HepG2 (cell line): ENCODE measurements at regions of chr1 and their contacts with region 1.

Region 1: DNA sequence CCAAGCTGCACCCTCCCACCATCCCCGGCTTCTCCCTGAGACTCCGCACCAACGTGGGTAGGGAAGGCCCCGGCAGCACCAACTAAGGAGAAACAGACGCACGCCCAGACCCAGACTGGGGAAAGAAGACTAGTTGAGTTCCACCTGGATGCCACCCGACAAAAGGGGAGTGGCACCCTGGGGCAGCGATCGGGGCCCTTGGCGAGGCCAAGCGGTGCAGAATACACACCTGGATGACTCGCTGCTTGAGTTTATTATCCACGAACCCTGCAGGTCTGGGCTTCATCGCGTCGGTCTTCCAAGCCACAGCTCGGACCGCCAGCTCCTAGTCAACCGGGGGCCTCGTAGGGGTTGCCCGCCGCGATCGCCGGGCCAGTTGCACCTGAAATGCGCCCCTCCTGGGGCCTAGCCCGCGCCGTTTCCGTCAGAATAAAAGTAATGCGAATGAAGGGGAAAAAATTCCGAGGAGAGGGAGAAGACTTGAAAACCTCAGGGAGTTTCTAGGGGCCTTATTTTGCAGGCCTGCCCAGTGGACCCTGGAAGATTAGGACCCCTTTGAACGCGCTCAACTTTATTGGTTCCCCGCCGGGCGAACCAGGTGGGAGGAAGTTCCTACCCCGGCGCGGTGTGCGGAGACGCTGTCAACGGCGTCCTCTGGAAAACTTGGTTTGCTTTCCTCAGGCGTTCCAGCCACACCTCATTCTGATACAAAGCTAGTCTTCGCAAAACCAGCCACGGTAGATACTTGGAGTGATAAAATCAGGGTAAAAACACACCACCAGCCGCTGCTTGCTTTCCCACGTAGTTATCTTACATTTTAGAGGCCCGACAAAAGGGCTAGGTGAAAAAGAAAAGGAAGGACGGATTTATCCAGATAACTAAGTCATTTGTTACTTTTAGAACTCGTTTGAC is at the start of gene NVL:
- DNase-seq: peak; percentile 82
- ATAC-seq: peak; percentile 97
- H3K4me3 ChIP-seq: peak within 1 kb of the TSS; percentile 76 to 94 (median 81)
- H3K27ac ChIP-seq: peak within 1 kb of the TSS; percentile 93
- H3K4me1 ChIP-seq: peaks cover 15% of the 10 kb centered on the region
- H3K27me3 ChIP-seq: no peaks in the 10 kb centered on the region; a peak in 1 of 5 replicates
- CTCF ChIP-seq: no peak
- EP300 ChIP-seq: peak in 1 of 2 experiments; percentile 37; a peak in 1 of 4 replicates
- POLR2A ChIP-seq: peak; percentile 42 to 60
- RAD21 ChIP-seq: no peak
- total RNA-seq, gene NVL: 18.2 and 21.0 TPM in 2 replicates

Region 2: GRCh38 chr1:224113918-224114786 is 215.9 kb before region 1 on chr1 and contains the start of gene FBXO28:
- CTCF ChIA-PET with region 1: interaction called, 7 read pairs
- POLR2A ChIA-PET with region 1: interaction called, 3 read pairs
- in situ Hi-C with region 1: loop called (anchors 5 kb)
- intact Hi-C with region 1: loop called (anchors 1 kb)
- DNase-seq: peak; percentile 91
- ATAC-seq: peak; percentile 98
- H3K4me3 ChIP-seq: peak within 1 kb of the TSS; percentile 88 to 96 (median 89)
- H3K27ac ChIP-seq: peak within 1 kb of the TSS; percentile 77
- H3K4me1 ChIP-seq: peaks cover 20% of the 10 kb centered on the region
- H3K27me3 ChIP-seq: peaks cover 0 to 3% of the 10 kb centered on the region in 2 experiments; a peak in 1 of 5 replicates
- CTCF ChIP-seq: no peak
- EP300 ChIP-seq: 0 out of 4 replicates have a peak, but pooled peaks of 1 of the 2 experiments have one; percentile 30
- POLR2A ChIP-seq: peak; percentile 87 to 94
- RAD21 ChIP-seq: peak; percentile 41; the same call in 1 of the 2 replicates
- total RNA-seq, gene FBXO28: 29.1 and 38.2 TPM in 2 replicates

Region 3: GRCh38 chr1:224170365-224171112 is 159.6 kb before region 1 on chr1:
- CTCF ChIA-PET with region 1: interaction called, 11 read pairs
- POLR2A ChIA-PET with region 1: no interaction called
- in situ Hi-C with region 1: no loop called
- intact Hi-C with region 1: loop called (anchors 1 kb)
- DNase-seq: peak; percentile 13
- ATAC-seq: peak; percentile 59
- H3K4me3 ChIP-seq: no peak overlapping the region
- H3K27ac ChIP-seq: no peak overlapping the region
- H3K4me1 ChIP-seq: peaks cover 23% of the 10 kb centered on the region
- H3K27me3 ChIP-seq: no peaks in the 10 kb centered on the region; a peak in 1 of 5 replicates
- CTCF ChIP-seq: peak; percentile 34; the same call in 1 of the 2 replicates
- EP300 ChIP-seq: no peak
- POLR2A ChIP-seq: no peak
- RAD21 ChIP-seq: no peak

Region 4: GRCh38 chr1:224266105-224266935 is 63.8 kb before region 1 on chr1:
- CTCF ChIA-PET with region 1: no interaction called
- POLR2A ChIA-PET with region 1: no interaction called
- in situ Hi-C with region 1: no loop called
- intact Hi-C with region 1: loop called (anchors 10 kb)
- DNase-seq: no peak
- ATAC-seq: no peak
- H3K4me3 ChIP-seq: no peak overlapping the region
- H3K27ac ChIP-seq: no peak overlapping the region
- H3K4me1 ChIP-seq: peaks cover 4% of the 10 kb centered on the region; the same call in 1 of the 2 replicates
- H3K27me3 ChIP-seq: no peaks in the 10 kb centered on the region
- CTCF ChIP-seq: no peak
- EP300 ChIP-seq: no peak
- POLR2A ChIP-seq: no peak
- RAD21 ChIP-seq: no peak